Prostate gland (tissue), 2 donors: ENCODE measurements at regions of chr6 and their contacts with region 1.

Region 1: GRCh38 chr6:71420693-71421328 is 132.2 kb downstream of the OGFRL1 start:
- DNase-seq: peak; percentile 97
- H3K4me3 ChIP-seq: peak overlapping the region; percentile 82 to 98
- H3K27ac ChIP-seq: peak overlapping the region; percentile 92 to 94
- H3K4me1 ChIP-seq: no peaks in the 10 kb centered on the region
- H3K27me3 ChIP-seq: no peaks in the 10 kb centered on the region
- CTCF ChIP-seq: peak in 1 of 4 experiments; percentile 48
- POLR2A ChIP-seq: peak; percentile 88

Region 2: GRCh38 chr6:71197780-71198179 is 223.0 kb before region 1 on chr6:
- intact Hi-C with region 1: no loop called
- DNase-seq: no peak
- H3K4me3 ChIP-seq: no peak overlapping the region
- H3K27ac ChIP-seq: no peak overlapping the region
- H3K4me1 ChIP-seq: no peaks in the 10 kb centered on the region
- H3K27me3 ChIP-seq: no peaks in the 10 kb centered on the region
- CTCF ChIP-seq: no peak
- POLR2A ChIP-seq: no peak

Region 3: GRCh38 chr6:71288228-71289001 is 132.4 kb before region 1 on chr6 and contains the start of gene OGFRL1:
- intact Hi-C with region 1: loop called (anchors 2 kb)
- DNase-seq: peak; percentile 74
- H3K4me3 ChIP-seq: peak within 1 kb of the TSS; percentile 69 to 76
- H3K27ac ChIP-seq: peak within 1 kb of the TSS; percentile 87 to 89
- H3K4me1 ChIP-seq: no peaks in the 10 kb centered on the region
- H3K27me3 ChIP-seq: no peaks in the 10 kb centered on the region
- CTCF ChIP-seq: peak in 2 of 4 experiments; percentile 18 to 32
- POLR2A ChIP-seq: peak; percentile 48
- total RNA-seq, gene OGFRL1: 18.4 to 20.4 TPM

Region 4: DNA sequence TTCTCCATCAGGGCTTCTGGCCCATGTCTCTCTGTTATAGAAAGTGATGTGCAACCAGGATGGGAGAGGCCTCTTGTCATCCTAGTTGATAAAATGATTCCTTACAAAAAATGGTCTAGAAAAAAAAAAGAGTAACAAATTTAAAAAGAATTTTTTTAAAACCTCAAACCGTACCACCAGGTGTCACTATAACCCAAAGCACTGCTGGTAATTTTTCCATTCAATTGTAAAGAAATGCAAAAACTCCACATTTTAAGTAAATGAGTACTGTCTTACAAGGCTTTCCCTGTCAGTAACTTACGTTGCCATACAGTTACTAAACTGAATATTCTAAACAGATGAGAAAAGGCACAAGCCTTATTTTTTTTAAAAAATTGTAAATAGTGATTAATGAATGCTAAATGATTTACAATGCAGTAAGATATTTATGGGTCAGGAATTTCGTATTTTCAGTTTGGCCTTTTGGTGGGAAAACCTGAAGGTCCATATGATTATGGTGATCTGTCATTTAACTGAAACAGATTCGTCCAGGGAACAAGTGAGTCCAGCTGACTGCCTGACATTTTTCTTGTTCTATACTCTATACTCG is 36.8 kb before region 1 on chr6:
- intact Hi-C with region 1: loop called (anchors 2 kb)
- DNase-seq: no peak
- H3K4me3 ChIP-seq: no peak overlapping the region
- H3K27ac ChIP-seq: no peak overlapping the region
- H3K4me1 ChIP-seq: no peaks in the 10 kb centered on the region
- H3K27me3 ChIP-seq: no peaks in the 10 kb centered on the region
- CTCF ChIP-seq: peak; percentile 63 to 70 (median 64)
- POLR2A ChIP-seq: no peak

Region 5: GRCh38 chr6:71473926-71474325 is 53.1 kb after region 1 on chr6:
- intact Hi-C with region 1: no loop called
- DNase-seq: no peak
- H3K4me3 ChIP-seq: no peak overlapping the region
- H3K27ac ChIP-seq: no peak overlapping the region
- H3K4me1 ChIP-seq: no peaks in the 10 kb centered on the region
- H3K27me3 ChIP-seq: no peaks in the 10 kb centered on the region
- CTCF ChIP-seq: no peak
- POLR2A ChIP-seq: no peak

Region 6: DNA sequence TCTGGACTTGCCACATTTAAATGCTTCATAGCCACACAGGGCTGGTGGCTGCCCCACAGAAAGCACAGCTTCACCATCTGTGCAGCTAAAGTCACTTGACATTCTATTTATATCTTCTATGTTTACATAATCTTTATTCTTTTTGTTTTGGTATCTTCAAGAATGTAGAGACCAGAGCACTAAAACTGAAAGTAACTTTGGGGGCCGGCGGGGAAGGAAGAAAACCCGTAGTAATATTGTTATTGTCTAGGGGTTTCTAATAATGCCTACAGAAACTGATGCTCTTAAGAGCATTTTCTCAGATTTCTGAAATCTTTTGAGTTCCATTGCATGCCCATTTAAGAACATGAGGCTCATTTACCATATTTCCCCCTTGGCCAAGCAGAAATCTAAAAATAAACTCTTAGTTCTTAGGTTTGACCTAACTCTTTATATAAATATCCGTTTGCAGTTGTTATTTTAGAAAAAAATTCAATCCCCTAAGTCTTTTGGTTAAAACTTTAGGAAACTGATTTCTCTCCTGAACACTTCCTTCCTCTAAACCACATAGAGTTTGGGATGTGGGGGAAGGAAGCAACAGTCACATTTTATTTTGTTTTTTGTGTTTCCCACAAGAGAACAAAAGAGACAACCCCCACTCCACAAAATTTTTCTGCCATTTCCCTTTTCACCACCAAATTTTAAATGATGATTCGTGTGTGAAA is 75.4 kb after region 1 on chr6:
- intact Hi-C with region 1: loop called (anchors 10 kb)
- DNase-seq: no peak
- H3K4me3 ChIP-seq: no peak overlapping the region
- H3K27ac ChIP-seq: peak overlapping the region in 1 of 2 donors; percentile 30
- H3K4me1 ChIP-seq: no peaks in the 10 kb centered on the region
- H3K27me3 ChIP-seq: no peaks in the 10 kb centered on the region
- CTCF ChIP-seq: no peak
- POLR2A ChIP-seq: no peak